ENCODE measurements at regions of chr1 and their contacts with region 1.

Region 1: GRCh38 chr1:157193702-157194391 is 55.7 kb upstream of the ETV3 start:
- DNase-seq: peak; percentile 63
- H3K4me3 ChIP-seq: no peak overlapping the region
- H3K27ac ChIP-seq: no peak overlapping the region
- H3K4me1 ChIP-seq: peaks cover 15% of the 10 kb centered on the region
- H3K27me3 ChIP-seq: no peaks in the 10 kb centered on the region
- CTCF ChIP-seq: peak; percentile 70 to 72

Region 2: DNA sequence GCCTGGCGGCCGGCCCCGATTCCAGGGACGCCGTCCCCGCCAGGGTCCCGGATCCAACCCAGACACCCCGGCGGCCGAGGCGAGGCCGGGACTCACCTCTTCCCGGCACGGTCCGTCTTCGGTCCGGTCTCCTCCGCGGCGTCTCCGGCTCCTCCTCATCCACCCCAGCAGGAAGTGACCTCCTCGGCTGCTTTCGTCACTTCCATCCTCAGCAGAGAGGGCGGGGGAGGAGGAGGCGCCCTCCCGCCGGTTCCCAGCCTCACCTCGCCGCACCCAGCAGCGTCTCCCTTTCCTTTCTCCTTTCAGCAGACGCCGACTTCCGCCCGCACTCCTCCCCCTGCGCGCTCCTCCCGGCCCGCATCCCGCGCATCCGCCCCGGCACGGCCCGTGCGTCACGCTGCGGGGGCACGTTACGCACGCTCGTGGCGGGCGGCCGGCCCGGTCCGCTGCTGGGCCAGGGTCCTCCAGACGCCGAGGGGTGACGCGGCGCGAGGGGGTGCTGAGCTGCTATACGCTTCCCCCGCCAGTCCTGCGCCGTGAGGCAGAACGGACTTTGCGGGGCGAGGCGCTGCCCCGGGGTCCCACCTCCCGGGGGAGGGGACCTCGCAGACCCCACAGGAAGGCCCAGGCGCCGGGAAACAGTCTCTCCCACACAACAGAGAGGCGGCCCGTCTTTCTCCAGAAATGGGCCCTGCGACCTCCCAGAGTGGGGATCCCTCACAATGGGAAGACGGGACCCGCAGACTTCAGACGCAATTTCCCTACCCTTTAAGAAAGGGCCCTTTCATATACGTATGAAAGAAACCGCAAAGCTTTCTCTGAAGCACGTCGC is 55.4 kb before region 1 on chr1 and contains the start of gene ETV3:
- CTCF ChIA-PET with region 1: no interaction called
- dilution Hi-C with region 1: no loop called
- in situ Hi-C with region 1: no loop called
- intact Hi-C with region 1: no loop called
- DNase-seq: peak; percentile 95
- H3K4me3 ChIP-seq: peak within 1 kb of the TSS; percentile 91 to 96 (median 93)
- H3K27ac ChIP-seq: peak within 1 kb of the TSS; percentile 81
- H3K4me1 ChIP-seq: peaks cover 40% of the 10 kb centered on the region
- H3K27me3 ChIP-seq: no peaks in the 10 kb centered on the region
- CTCF ChIP-seq: no peak
- total RNA-seq, gene ETV3: 20.5 to 34.1 TPM

Region 3: GRCh38 chr1:157240495-157241184 is 46.8 kb after region 1 on chr1:
- CTCF ChIA-PET with region 1: no interaction called
- dilution Hi-C with region 1: no loop called
- in situ Hi-C with region 1: no loop called
- intact Hi-C with region 1: no loop called
- DNase-seq: no peak
- H3K4me3 ChIP-seq: no peak overlapping the region
- H3K27ac ChIP-seq: no peak overlapping the region
- H3K4me1 ChIP-seq: no peaks in the 10 kb centered on the region
- H3K27me3 ChIP-seq: peaks cover 4% of the 10 kb centered on the region
- CTCF ChIP-seq: no peak

Region 4: GRCh38 chr1:157274698-157275534 is 81.1 kb after region 1 on chr1:
- CTCF ChIA-PET with region 1: no interaction called
- dilution Hi-C with region 1: no loop called
- in situ Hi-C with region 1: no loop called
- intact Hi-C with region 1: no loop called
- DNase-seq: peak; percentile 47
- H3K4me3 ChIP-seq: no peak overlapping the region
- H3K27ac ChIP-seq: no peak overlapping the region
- H3K4me1 ChIP-seq: no peaks in the 10 kb centered on the region
- H3K27me3 ChIP-seq: peaks cover 2% of the 10 kb centered on the region
- CTCF ChIP-seq: no peak

Region 5: GRCh38 chr1:157369808-157370521 is 176.1 kb after region 1 on chr1:
- CTCF ChIA-PET with region 1: interaction called, 5 read pairs
- dilution Hi-C with region 1: no loop called
- in situ Hi-C with region 1: loop called (anchors 10 to 25 kb)
- intact Hi-C with region 1: loop called (anchors 2 kb)
- DNase-seq: peak; percentile 50
- H3K4me3 ChIP-seq: no peak overlapping the region
- H3K27ac ChIP-seq: no peak overlapping the region
- H3K4me1 ChIP-seq: no peaks in the 10 kb centered on the region
- H3K27me3 ChIP-seq: no peaks in the 10 kb centered on the region
- CTCF ChIP-seq: peak; percentile 83 to 91

Region 6: DNA sequence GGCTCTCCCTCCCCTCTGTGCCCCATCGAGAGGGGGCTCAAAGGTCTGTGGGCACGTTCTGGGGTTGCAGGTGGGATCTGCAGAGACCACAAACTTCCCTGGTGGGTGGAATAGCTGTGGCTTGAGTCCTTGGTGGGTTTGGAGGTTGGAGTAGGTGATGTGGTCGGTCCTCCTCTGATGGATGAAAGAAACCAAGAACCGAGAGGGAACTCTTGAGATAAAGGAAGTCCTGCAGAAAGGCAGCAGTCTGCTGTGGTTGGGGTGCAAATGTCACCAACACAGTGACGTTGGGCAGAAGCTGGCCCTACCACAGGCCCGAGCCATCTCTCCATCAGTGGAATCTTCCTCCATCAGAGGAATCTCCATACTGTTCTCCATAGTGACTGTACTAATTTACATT is 186.7 kb after region 1 on chr1:
- CTCF ChIA-PET with region 1: no interaction called
- dilution Hi-C with region 1: no loop called
- in situ Hi-C with region 1: loop called in 1 of 2 experiments (anchors 25 kb)
- intact Hi-C with region 1: loop called (anchors 2 kb)
- DNase-seq: no peak
- H3K4me3 ChIP-seq: no peak overlapping the region
- H3K27ac ChIP-seq: no peak overlapping the region
- H3K4me1 ChIP-seq: no peaks in the 10 kb centered on the region
- H3K27me3 ChIP-seq: no peaks in the 10 kb centered on the region
- CTCF ChIP-seq: no peak

Region 7: DNA sequence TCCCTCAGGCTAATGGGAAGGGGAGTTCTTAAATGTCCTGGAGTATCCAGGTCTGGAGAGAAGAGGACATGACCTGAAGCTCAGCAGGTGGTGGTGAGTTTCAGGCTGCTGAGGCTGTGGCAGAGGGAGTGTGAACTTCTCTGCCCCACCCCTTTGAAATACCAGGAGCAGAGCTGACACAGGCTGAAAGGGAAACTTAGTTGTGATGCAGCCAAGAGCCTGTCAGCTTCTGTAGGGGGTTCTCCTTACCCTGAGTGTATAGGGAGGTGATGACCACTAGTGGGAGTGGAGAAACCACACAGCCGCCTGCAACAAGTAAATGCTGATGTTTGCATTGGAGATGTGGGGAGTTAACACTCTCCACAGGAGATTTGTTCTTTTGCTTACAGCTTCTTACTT is 206.1 kb after region 1 on chr1:
- CTCF ChIA-PET with region 1: no interaction called
- dilution Hi-C with region 1: no loop called
- in situ Hi-C with region 1: loop called in 1 of 2 experiments (anchors 25 kb)
- intact Hi-C with region 1: no loop called
- DNase-seq: no peak
- H3K4me3 ChIP-seq: no peak overlapping the region
- H3K27ac ChIP-seq: no peak overlapping the region
- H3K4me1 ChIP-seq: no peaks in the 10 kb centered on the region
- H3K27me3 ChIP-seq: no peaks in the 10 kb centered on the region
- CTCF ChIP-seq: no peak

Region 8: GRCh38 chr1:157691285-157691920 is 497.6 kb after region 1 on chr1:
- CTCF ChIA-PET with region 1: no interaction called
- dilution Hi-C with region 1: no loop called
- in situ Hi-C with region 1: no loop called
- intact Hi-C with region 1: loop called (anchors 10 kb)
- DNase-seq: peak; percentile 14
- H3K4me3 ChIP-seq: no peak overlapping the region
- H3K27ac ChIP-seq: no peak overlapping the region
- H3K4me1 ChIP-seq: no peaks in the 10 kb centered on the region
- H3K27me3 ChIP-seq: peaks cover 2% of the 10 kb centered on the region
- CTCF ChIP-seq: peak; percentile 53 to 72

Measured in mammary epithelial cell (primary cell).